ENCODE measurements at regions of chr6 and their contacts with region 1.

Region 1: GRCh38 chr6:3410385-3411360 is 46.2 kb downstream of the SLC22A23 start:
- DNase-seq: peak in 1 of 2 donors; percentile 57
- ATAC-seq: peak in 2 of 4 donors; percentile 59
- H3K4me3 ChIP-seq: no peak overlapping the region
- H3K27ac ChIP-seq: no peak overlapping the region
- H3K4me1 ChIP-seq: peaks cover 32% of the 10 kb centered on the region
- H3K27me3 ChIP-seq: no peaks in the 10 kb centered on the region
- CTCF ChIP-seq: peak; percentile 72

Region 2: DNA sequence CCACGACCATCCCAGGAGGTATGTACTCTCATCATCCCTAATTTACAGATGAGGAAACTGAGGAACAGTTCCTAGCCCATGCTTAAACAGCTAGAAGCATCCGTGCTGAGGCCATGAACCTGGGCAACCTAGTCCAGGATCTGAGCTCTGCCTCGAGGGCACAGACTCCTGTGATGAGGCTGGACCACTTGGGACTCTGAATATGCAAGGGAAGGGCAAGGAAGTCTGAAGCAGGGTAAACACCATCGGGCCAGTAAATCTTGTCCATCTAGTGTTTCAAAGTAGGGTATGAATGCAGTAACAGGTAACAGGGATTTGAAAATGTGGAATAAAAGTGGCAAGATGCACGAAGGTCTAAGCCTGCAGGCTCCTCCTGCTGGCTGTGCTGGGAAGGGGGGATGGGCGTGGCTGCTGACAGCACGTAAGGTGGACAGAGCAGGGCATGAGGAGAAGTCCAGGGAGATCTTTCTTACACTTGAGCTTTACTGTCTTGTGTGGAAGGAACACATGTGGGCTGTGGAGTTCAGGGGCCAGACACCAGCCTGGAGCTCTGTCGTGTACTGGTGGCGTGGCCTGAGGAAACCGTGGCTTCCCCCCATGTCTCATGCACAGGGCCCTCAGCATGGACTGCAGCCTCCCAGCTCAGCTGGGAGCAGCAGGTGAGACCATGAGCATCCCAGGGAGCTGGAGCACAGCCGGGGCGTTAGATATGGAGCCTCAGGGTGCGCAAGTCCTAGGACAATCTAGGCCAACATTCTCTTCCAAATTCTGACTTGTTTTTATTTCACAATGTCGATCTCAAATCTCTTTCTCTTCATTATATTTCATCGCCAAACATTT is 38.4 kb before region 1 on chr6:
- intact Hi-C with region 1: loop called in 1 of 2 experiments (anchors 5 kb)
- DNase-seq: no peak
- ATAC-seq: peak in 1 of 4 donors; percentile 23
- H3K4me3 ChIP-seq: no peak overlapping the region
- H3K27ac ChIP-seq: no peak overlapping the region
- H3K4me1 ChIP-seq: peaks cover 8% of the 10 kb centered on the region
- H3K27me3 ChIP-seq: no peaks in the 10 kb centered on the region
- CTCF ChIP-seq: no peak

Measured in psoas muscle (tissue), 8 donors.